ENCODE measurements at regions of chr1 and their contacts with region 1.

Region 1: DNA sequence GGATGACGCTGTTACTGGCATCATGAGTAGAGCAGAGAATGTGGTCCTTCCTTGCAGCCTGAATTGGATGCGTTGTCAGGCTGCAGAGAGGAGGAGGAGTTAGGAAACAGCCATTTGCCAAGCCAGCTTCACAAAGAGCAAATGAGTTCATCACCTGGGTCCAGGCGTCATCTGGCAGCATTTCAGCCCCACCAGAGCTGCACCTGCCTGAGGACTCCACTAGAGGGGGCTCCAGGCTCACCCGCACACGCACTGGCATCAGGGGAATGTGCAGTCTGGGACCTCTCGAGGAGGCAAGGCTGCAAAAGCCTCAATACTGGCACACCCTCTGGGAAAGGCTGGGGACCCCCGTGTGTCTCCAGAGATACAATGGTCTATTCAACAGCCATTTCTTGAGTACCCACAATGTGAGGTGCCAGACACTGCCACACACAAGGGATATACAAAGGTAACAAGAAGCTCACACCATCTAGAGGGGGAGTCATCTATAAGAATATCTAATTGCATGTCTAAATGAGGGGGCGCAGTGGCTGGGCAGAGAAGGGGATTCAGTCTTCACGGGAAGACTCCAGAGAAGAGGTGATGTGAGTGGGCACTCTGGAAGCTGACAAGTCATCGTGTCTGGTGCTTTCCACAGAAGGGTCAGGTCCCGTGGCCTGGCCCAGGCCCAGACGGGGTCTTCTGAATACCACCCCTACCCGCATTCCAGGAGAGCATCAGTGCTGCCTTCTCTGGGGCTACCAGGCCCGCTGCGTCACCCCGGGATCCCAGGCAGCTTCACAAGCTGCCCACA is 53.5 kb upstream of the CNTN2 start:
- DNase-seq: peak; percentile 85
- ATAC-seq: peak; percentile 87
- H3K4me3 Mint-ChIP-seq: no peak overlapping the region
- H3K27ac Mint-ChIP-seq: no peak overlapping the region
- H3K4me1 Mint-ChIP-seq: peaks cover 35% of the 10 kb centered on the region
- H3K27me3 Mint-ChIP-seq: peaks cover 20% of the 10 kb centered on the region
- CTCF ChIP-seq: peak; percentile 95

Region 2: GRCh38 chr1:204932573-204932909 is 56.9 kb before region 1 on chr1:
- CTCF ChIA-PET with region 1: no interaction called
- POLR2A ChIA-PET with region 1: no interaction called
- DNase-seq: no peak
- ATAC-seq: no peak
- H3K4me3 Mint-ChIP-seq: no peak overlapping the region
- H3K27ac Mint-ChIP-seq: no peak overlapping the region
- H3K4me1 Mint-ChIP-seq: peaks cover 10% of the 10 kb centered on the region; the same call in 1 of the 2 replicates
- H3K27me3 Mint-ChIP-seq: no peaks in the 10 kb centered on the region
- CTCF ChIP-seq: no peak

Region 3: GRCh38 chr1:204975570-204976235 is 13.8 kb before region 1 on chr1:
- CTCF ChIA-PET with region 1: interaction called, 30 read pairs
- POLR2A ChIA-PET with region 1: no interaction called
- DNase-seq: peak; percentile 73
- ATAC-seq: peak; percentile 88
- H3K4me3 Mint-ChIP-seq: no peak overlapping the region
- H3K27ac Mint-ChIP-seq: no peak overlapping the region
- H3K4me1 Mint-ChIP-seq: no peaks in the 10 kb centered on the region
- H3K27me3 Mint-ChIP-seq: no peaks in the 10 kb centered on the region
- CTCF ChIP-seq: peak; percentile 84

Region 4: GRCh38 chr1:205020466-205020865 is 31.0 kb after region 1 on chr1:
- CTCF ChIA-PET with region 1: interaction called, 22 read pairs
- POLR2A ChIA-PET with region 1: no interaction called
- DNase-seq: no peak
- ATAC-seq: no peak
- H3K4me3 Mint-ChIP-seq: no peak overlapping the region
- H3K27ac Mint-ChIP-seq: no peak overlapping the region
- H3K4me1 Mint-ChIP-seq: no peaks in the 10 kb centered on the region
- H3K27me3 Mint-ChIP-seq: peaks cover 23% of the 10 kb centered on the region
- CTCF ChIP-seq: no peak

Region 5: DNA sequence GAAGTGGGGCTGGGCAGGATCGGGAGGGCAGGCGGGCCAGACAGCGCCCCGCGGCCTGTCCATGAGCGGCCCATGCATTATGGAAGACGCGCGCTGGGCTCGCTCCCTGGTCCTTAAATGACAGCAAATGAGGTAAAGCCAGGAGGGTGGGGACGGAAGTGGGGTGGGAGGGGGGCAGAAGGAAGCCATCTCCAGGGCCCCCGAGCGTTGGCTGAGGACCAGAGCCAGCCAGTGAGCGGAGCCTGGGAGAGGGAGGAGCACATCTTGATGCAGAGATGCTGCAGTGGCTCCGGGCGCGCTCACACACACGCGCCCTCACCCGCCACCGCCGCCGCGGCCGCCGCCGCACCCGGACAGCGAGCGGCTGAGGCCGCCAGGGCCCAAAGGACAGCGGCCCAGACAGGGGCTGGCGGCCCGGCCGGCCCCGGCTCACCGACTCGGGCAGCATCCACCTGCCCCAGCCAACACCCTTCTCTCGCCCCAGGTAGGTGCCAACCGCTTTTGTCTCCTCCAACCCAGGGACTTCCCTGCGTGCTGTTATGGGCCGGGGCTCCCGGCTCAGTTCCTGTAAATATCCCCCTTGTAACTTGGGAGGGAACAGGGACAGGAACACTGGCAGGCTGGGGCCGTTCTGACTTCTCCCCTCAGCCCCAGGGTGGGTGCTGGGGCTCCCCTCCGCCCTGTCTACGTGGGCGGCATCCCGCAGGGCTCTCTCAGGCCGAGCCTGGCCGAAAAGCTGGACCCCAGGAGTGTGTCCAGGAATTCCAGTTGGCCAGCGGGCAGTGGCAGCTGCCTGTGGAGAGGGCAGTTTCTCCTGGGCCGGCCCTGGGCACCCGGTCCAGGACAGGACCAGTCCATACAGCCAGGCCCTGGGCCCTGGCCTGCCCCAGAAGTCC is 53.7 kb after region 1 on chr1 and contains the start of gene CNTN2:
- CTCF ChIA-PET with region 1: interaction called, 11 read pairs
- POLR2A ChIA-PET with region 1: no interaction called
- DNase-seq: peak; percentile 46
- ATAC-seq: peak; percentile 76
- H3K4me3 Mint-ChIP-seq: peak within 1 kb of the TSS; percentile 30
- H3K27ac Mint-ChIP-seq: no peak within 1 kb of the TSS
- H3K4me1 Mint-ChIP-seq: peaks cover 33% of the 10 kb centered on the region
- H3K27me3 Mint-ChIP-seq: peaks cover 44% of the 10 kb centered on the region
- CTCF ChIP-seq: no peak
- total RNA-seq, gene CNTN2: 0.89 to 1.3 TPM (median 1.2 TPM) in 3 replicates

Region 6: GRCh38 chr1:205054013-205054412 is 64.6 kb after region 1 on chr1:
- CTCF ChIA-PET with region 1: interaction called, 25 read pairs
- POLR2A ChIA-PET with region 1: no interaction called
- DNase-seq: no peak
- ATAC-seq: peak; percentile 14; the same call in 1 of the 2 replicates
- H3K4me3 Mint-ChIP-seq: no peak overlapping the region
- H3K27ac Mint-ChIP-seq: no peak overlapping the region
- H3K4me1 Mint-ChIP-seq: no peaks in the 10 kb centered on the region
- H3K27me3 Mint-ChIP-seq: no peaks in the 10 kb centered on the region
- CTCF ChIP-seq: no peak

Region 7: GRCh38 chr1:205121660-205122488 is 132.4 kb after region 1 on chr1 and contains the start of gene RBBP5:
- CTCF ChIA-PET with region 1: interaction called, 10 read pairs
- POLR2A ChIA-PET with region 1: no interaction called
- DNase-seq: peak; percentile 96
- ATAC-seq: peak; percentile 100
- H3K4me3 Mint-ChIP-seq: peak within 1 kb of the TSS; percentile 98
- H3K27ac Mint-ChIP-seq: peak within 1 kb of the TSS; percentile 100
- H3K4me1 Mint-ChIP-seq: peaks cover 18% of the 10 kb centered on the region
- H3K27me3 Mint-ChIP-seq: no peaks in the 10 kb centered on the region; the same call in 1 of the 2 replicates
- CTCF ChIP-seq: no peak
- total RNA-seq, gene RBBP5: 18.5 to 23.8 TPM (median 20.1 TPM) in 3 replicates

Measured in WTC11 (cell line).